ENCODE measurements at regions of chr6 and their contacts with region 1.

Region 1: GRCh38 chr6:151014404-151015100 is 149.1 kb downstream of the MTHFD1L start:
- DNase-seq: peak in 6 of 7 donors; percentile 55 to 87 (median 58)
- H3K4me3 ChIP-seq: no peak overlapping the region
- H3K27ac ChIP-seq: no peak overlapping the region
- H3K4me1 ChIP-seq: peaks cover 0 to 4% of the 10 kb centered on the region in 2 donors
- H3K27me3 ChIP-seq: no peaks in the 10 kb centered on the region
- CTCF ChIP-seq: peak; percentile 88 to 99 (median 94)
- POLR2A ChIP-seq: no peak

Region 2: DNA sequence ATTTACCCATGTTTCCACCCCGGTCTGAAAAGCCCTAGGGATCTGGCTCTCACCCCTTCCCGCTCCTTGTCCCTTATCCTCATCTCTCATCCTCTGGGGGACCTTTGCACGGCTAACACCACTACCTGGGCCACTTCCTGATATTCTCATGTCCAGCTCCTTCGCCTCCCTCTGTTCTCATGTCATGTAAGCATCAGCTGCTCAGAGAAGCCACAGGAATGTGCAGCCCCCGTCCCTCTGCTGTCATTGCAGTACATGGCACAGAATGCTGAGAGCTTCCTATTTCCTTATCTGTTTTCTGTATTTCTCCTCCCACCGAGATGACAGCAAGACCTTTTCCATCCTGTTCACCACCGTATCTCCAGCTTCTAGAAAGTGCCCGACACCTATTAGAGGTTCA is 46.6 kb before region 1 on chr6:
- intact Hi-C with region 1: no loop called
- DNase-seq: no peak
- H3K4me3 ChIP-seq: no peak overlapping the region
- H3K27ac ChIP-seq: no peak overlapping the region
- H3K4me1 ChIP-seq: no peaks in the 10 kb centered on the region
- H3K27me3 ChIP-seq: no peaks in the 10 kb centered on the region
- CTCF ChIP-seq: no peak
- POLR2A ChIP-seq: no peak

Region 3: GRCh38 chr6:151263967-151264366 is 249.4 kb after region 1 on chr6:
- intact Hi-C with region 1: no loop called
- DNase-seq: peak in 5 of 7 donors; percentile 20 to 62 (median 40)
- H3K4me3 ChIP-seq: no peak overlapping the region
- H3K27ac ChIP-seq: peak overlapping the region in 1 of 5 donors; percentile 58
- H3K4me1 ChIP-seq: no peaks in the 10 kb centered on the region
- H3K27me3 ChIP-seq: no peaks in the 10 kb centered on the region
- CTCF ChIP-seq: no peak
- POLR2A ChIP-seq: no peak

Region 4: GRCh38 chr6:151323791-151324487 is 309.4 kb after region 1 on chr6:
- intact Hi-C with region 1: loop called (anchors 2 to 5 kb)
- DNase-seq: peak; percentile 75 to 93 (median 80)
- H3K4me3 ChIP-seq: no peak overlapping the region
- H3K27ac ChIP-seq: peak overlapping the region in 2 of 5 donors; percentile 41 to 66
- H3K4me1 ChIP-seq: peaks cover 4 to 24% of the 10 kb centered on the region in 2 donors
- H3K27me3 ChIP-seq: no peaks in the 10 kb centered on the region
- CTCF ChIP-seq: peak; percentile 94 to 98 (median 97)
- POLR2A ChIP-seq: no peak

Region 5: DNA sequence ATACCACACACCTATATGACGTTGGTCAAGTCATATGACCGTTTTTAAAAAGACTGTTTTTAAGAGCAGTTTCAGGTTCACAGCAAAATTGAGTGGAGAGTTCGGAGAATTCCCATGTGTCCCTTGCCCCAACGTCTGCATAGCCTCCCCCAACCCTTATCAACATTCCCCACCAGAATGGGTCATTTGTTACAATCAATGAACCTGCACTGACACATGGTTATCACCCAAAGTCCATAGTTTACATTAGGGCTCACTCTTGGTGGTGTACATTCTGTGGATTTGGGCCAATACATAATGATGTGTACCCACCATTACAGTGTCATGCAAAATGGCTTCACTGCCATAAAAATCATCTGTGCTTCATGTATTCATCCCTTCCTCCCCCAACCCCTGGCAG is 324.8 kb after region 1 on chr6:
- intact Hi-C with region 1: loop called in 1 of 2 experiments (anchors 5 kb)
- DNase-seq: no peak
- H3K4me3 ChIP-seq: no peak overlapping the region
- H3K27ac ChIP-seq: no peak overlapping the region
- H3K4me1 ChIP-seq: no peaks in the 10 kb centered on the region
- H3K27me3 ChIP-seq: no peaks in the 10 kb centered on the region
- CTCF ChIP-seq: no peak
- POLR2A ChIP-seq: no peak

Measured in adrenal gland (tissue), 19 donors.